Sigmoid colon (tissue), 7 donors: ENCODE measurements at regions of chr14 and their contacts with region 1.

Region 1: GRCh38 chr14:39266871-39267591 is 33.3 kb downstream of the MIA2 start:
- DNase-seq: peak; percentile 91
- H3K4me3 ChIP-seq: peak overlapping the region; percentile 57 to 74 (median 68)
- H3K27ac ChIP-seq: peak overlapping the region; percentile 93 to 97 (median 94)
- H3K4me1 ChIP-seq: peaks cover 0 to 39% (median 13%) of the 10 kb centered on the region in 4 donors
- H3K27me3 ChIP-seq: no peaks in the 10 kb centered on the region
- CTCF ChIP-seq: no peak
- EP300 ChIP-seq: no peak
- POLR2A ChIP-seq: peak in 1 of 2 donors; percentile 48

Region 2: GRCh38 chr14:39114073-39114838 is 152.8 kb before region 1 on chr14 and contains the start of gene GEMIN2:
- intact Hi-C with region 1: loop called (anchors 5 kb)
- DNase-seq: peak; percentile 96
- H3K4me3 ChIP-seq: peak within 1 kb of the TSS; percentile 54 to 79 (median 62)
- H3K27ac ChIP-seq: peak within 1 kb of the TSS; percentile 79 to 85 (median 80)
- H3K4me1 ChIP-seq: peaks cover 0 to 13% (median 6%) of the 10 kb centered on the region in 4 donors
- H3K27me3 ChIP-seq: no peaks in the 10 kb centered on the region
- CTCF ChIP-seq: no peak
- EP300 ChIP-seq: no peak
- POLR2A ChIP-seq: peak; percentile 21 to 28
- total RNA-seq, gene GEMIN2: 8.0 to 27.8 (median 16.7) TPM

Region 3: DNA sequence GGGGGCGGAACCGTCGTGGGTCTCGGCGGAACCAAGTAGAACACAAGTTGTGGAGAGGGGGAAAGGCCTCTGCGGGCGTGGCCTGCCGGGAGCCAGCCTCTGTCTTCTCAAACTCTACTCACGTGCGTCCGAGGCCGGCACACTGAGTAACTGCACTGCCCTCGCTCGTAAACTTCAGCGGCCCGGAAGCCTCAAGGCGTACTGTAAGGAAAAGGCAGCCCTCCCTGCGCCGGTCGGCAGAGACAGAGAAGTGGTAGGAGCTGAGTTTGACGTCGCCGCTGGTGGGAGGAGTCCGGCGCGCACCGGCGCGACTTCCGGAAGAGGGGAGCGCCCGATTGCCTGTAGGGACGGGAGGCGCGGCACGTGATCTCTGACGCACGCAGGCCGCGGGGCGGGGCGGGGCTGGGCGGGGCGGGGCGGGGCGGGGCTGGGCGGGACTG is 165.2 kb after region 1 on chr14 and contains the start of gene FBXO33:
- intact Hi-C with region 1: loop called (anchors 1 kb)
- DNase-seq: peak; percentile 99
- H3K4me3 ChIP-seq: peak within 1 kb of the TSS; percentile 82 to 95 (median 90)
- H3K27ac ChIP-seq: peak within 1 kb of the TSS; percentile 92 to 95 (median 94)
- H3K4me1 ChIP-seq: peaks cover 0 to 39% (median 34%) of the 10 kb centered on the region in 4 donors
- H3K27me3 ChIP-seq: no peaks in the 10 kb centered on the region
- CTCF ChIP-seq: no peak
- EP300 ChIP-seq: no peak
- POLR2A ChIP-seq: peak; percentile 12 to 27
- total RNA-seq, gene FBXO33: 7.2 to 12.2 (median 10.7) TPM

Region 4: DNA sequence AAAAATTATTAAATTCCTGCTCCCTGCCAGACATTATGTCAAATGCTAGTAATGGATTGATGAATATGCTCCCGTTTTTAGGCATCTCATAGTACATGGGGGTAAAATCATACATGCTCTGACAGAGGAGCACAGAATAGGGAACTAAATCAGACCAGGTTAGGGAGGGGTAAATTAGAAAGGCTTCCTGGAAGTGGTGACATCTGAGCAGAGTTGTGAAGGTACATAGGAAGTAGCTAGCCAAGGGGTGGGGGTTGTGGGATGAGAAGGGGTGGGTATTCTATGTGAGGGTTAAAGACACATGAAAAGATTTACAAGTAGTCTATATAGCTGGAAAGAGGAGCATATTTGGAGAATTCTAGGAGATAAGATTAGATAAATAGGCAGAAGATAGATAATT is 336.9 kb after region 1 on chr14:
- intact Hi-C with region 1: no loop called
- DNase-seq: no peak
- H3K4me3 ChIP-seq: no peak overlapping the region
- H3K27ac ChIP-seq: no peak overlapping the region
- H3K4me1 ChIP-seq: no peaks in the 10 kb centered on the region
- H3K27me3 ChIP-seq: no peaks in the 10 kb centered on the region
- CTCF ChIP-seq: no peak
- EP300 ChIP-seq: no peak
- POLR2A ChIP-seq: no peak